Activated T-helper 1 cell treated with anti-CD3 and anti-CD28 coated beads, Interleukin-12 subunit alpha, Interleukin-12 subunit beta, Interleukin-2, Interleukin-4 antibody, amounts not matched to agents 30 ng/mL and 10 ng/mL and 1 ng/mL, durations not matched to agents 14 hours and 24 hours and 36 hours (primary cell): ENCODE measurements at regions of chr15 and their contacts with region 1.

Region 1: GRCh38 chr15:88620995-88621772 is at the start of gene AEN:
- DNase-seq: peak; percentile 96
- H3K4me3 Mint-ChIP-seq: peak within 1 kb of the TSS; percentile 97
- H3K27ac Mint-ChIP-seq: peak within 1 kb of the TSS; percentile 94
- H3K4me1 Mint-ChIP-seq: peaks cover 44% of the 10 kb centered on the region
- H3K27me3 Mint-ChIP-seq: no peaks in the 10 kb centered on the region
- total RNA-seq, gene AEN: 74.2 and 76.4 TPM in 2 replicates

Region 2: DNA sequence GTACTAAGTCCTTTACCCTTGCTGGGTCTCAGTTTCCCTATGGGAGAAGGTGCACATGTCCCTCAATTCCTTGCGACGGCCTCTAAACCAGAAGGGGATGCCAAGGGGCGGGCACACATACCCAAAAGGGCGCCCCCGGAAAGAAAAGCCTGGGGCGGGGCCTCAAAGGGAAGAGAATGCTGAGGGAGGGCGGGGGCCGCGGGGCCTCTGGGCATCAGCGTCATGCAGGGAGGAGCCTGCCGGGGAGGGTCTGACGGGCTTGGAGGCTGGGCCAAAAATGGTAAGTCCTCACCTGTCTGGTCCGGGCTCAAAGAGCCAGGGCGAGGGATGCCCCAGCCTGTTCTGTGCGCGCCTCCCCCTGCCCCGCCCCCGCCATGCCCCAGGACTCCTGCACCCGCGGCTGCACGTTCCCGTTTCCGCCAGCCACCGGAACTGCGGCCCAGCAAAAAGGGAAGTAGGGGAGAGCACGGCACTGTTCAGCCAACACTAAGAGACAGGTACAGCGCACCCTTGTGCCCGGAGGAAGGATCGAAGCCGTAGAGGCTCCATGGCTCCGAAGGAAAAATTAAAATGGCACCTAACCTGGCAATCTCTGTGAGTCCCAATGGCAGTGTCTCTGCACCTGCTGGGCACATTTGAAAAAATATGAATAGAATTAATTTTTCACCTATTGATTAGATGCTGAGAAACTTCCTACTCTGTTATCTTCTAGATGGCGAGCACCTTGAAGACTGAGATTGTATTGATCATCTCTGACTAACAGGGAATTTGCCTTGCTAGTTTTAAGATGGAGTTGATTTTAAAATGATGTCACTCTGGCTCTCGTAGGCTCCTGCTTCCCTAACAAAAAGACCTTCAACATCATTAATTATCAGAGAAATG is 74.7 kb before region 1 on chr15 and contains the start of gene DET1:
- intact Hi-C with region 1: loop called (anchors 1 kb)
- DNase-seq: peak; percentile 91
- H3K4me3 Mint-ChIP-seq: peak within 1 kb of the TSS; percentile 88
- H3K27ac Mint-ChIP-seq: peak within 1 kb of the TSS; percentile 85
- H3K4me1 Mint-ChIP-seq: peaks cover 9% of the 10 kb centered on the region
- H3K27me3 Mint-ChIP-seq: peaks cover 1% of the 10 kb centered on the region
- total RNA-seq, gene DET1: 1.4 and 1.9 TPM in 2 replicates

Region 3: DNA sequence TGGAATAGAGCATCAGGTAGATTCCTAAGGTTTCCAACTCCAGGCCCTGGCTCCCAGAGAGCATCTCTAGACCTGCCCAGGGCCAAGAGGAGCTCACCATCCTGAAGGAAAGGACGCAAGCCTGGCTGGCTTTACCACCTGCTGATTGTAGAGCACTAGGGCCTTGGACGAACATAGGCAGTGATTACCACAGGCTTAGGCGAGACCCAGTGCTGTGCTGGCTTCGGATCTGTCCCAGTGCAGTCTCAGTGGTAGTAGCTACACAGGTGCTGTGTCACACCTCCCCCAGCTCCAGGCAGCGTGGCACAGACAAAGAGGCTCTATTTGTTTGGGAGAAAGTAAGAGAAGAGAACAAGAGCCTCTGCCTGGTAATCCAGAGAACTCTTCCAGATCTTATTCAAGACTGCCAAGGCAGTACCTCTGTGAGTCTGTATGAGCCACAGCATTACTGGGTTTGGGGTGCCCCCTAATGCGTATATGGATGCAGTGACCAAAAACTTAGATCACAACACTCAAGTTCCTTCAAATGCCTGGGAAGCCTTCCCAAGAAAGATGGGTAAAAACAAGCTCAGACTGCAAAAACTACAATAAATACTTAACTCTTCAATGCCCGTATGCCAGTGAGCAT is 43.1 kb after region 1 on chr15:
- intact Hi-C with region 1: loop called (anchors 1 kb)
- DNase-seq: no peak
- H3K4me3 Mint-ChIP-seq: no peak overlapping the region
- H3K27ac Mint-ChIP-seq: no peak overlapping the region
- H3K4me1 Mint-ChIP-seq: peaks cover 5% of the 10 kb centered on the region
- H3K27me3 Mint-ChIP-seq: peaks cover 10% of the 10 kb centered on the region

Region 4: GRCh38 chr15:88745696-88746095 is 124.5 kb after region 1 on chr15:
- intact Hi-C with region 1: no loop called
- DNase-seq: no peak
- H3K4me3 Mint-ChIP-seq: no peak overlapping the region
- H3K27ac Mint-ChIP-seq: no peak overlapping the region
- H3K4me1 Mint-ChIP-seq: no peaks in the 10 kb centered on the region
- H3K27me3 Mint-ChIP-seq: peaks cover 9% of the 10 kb centered on the region

Region 5: GRCh38 chr15:88776646-88777045 is 155.5 kb after region 1 on chr15:
- intact Hi-C with region 1: no loop called
- DNase-seq: no peak
- H3K4me3 Mint-ChIP-seq: no peak overlapping the region
- H3K27ac Mint-ChIP-seq: no peak overlapping the region
- H3K4me1 Mint-ChIP-seq: no peaks in the 10 kb centered on the region
- H3K27me3 Mint-ChIP-seq: peaks cover 9% of the 10 kb centered on the region

Region 6: GRCh38 chr15:88834211-88834812 is 213.1 kb after region 1 on chr15:
- intact Hi-C with region 1: loop called (anchors 5 kb)
- DNase-seq: no peak
- H3K4me3 Mint-ChIP-seq: no peak overlapping the region
- H3K27ac Mint-ChIP-seq: peak overlapping the region; percentile 18
- H3K4me1 Mint-ChIP-seq: peaks cover 8% of the 10 kb centered on the region
- H3K27me3 Mint-ChIP-seq: peaks cover 2% of the 10 kb centered on the region

Region 7: GRCh38 chr15:88918738-88919137 is 297.6 kb after region 1 on chr15:
- intact Hi-C with region 1: loop called (anchors 5 kb)
- DNase-seq: no peak
- H3K4me3 Mint-ChIP-seq: peak overlapping the region; percentile 20
- H3K27ac Mint-ChIP-seq: peak overlapping the region; percentile 6
- H3K4me1 Mint-ChIP-seq: peaks cover 34% of the 10 kb centered on the region
- H3K27me3 Mint-ChIP-seq: peaks cover 2% of the 10 kb centered on the region

Region 8: GRCh38 chr15:89087830-89088604 is 466.8 kb after region 1 on chr15 and contains the start of gene ABHD2:
- intact Hi-C with region 1: loop called (anchors 1 kb)
- DNase-seq: peak; percentile 98
- H3K4me3 Mint-ChIP-seq: no peak within 1 kb of the TSS
- H3K27ac Mint-ChIP-seq: no peak within 1 kb of the TSS
- H3K4me1 Mint-ChIP-seq: peaks cover 33% of the 10 kb centered on the region
- H3K27me3 Mint-ChIP-seq: no peaks in the 10 kb centered on the region
- total RNA-seq, gene ABHD2: 66.5 and 66.7 TPM in 2 replicates